ENCODE measurements at regions of chr18 and their contacts with region 1.

Region 1: DNA sequence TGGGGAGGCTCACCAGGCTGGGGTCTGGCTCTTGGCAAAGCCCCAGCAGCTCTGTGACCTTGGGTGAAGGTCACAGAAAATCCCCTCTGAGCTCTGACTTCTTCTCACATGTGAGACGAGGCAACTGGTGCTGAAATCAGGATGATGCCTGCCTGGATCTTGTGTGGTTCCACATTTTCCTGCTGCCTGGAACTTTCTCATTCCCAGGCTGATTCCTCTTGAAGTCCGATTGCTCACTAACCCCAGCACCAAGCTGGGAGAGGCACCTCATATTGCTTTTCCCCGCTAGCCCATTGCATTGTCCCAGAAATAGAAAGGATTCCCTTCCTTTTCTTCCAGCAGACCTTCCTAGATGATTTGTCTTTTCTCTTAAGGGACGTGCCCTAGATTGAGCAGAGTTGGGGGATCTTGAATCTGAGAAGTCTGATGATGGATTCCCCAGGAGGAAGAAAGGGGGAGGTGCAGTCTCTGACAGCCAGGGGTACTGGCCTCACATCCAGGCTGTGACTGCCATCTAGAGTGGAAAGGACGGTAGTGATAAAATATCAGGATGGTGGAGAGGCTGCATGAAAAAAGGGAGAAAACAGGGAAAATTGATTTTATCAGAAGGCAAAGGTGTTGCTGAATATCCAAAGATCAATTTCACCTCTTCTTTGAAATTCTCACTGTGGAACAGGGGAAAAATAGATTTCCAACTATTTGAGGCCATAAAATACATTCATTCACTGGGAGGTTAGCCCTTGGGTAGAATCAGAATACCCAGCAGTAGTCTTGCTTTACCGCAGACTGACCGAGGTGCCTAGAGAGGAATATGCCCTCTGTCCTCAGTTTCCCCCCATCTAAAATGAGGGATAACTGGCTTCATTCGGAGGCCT is 96.3 kb downstream of the FAM210A start:
- DNase-seq: peak; percentile 48
- ATAC-seq: peak; percentile 99
- H3K4me3 ChIP-seq: no peak overlapping the region
- H3K27ac ChIP-seq: no peak overlapping the region
- H3K4me1 ChIP-seq: no peaks in the 10 kb centered on the region
- H3K27me3 ChIP-seq: no peaks in the 10 kb centered on the region
- CTCF ChIP-seq: peak; percentile 73 to 86 (median 77); a peak in 5 of 6 replicates
- POLR2A ChIP-seq: no peak
- RAD21 ChIP-seq: peak; percentile 86

Region 2: GRCh38 chr18:12726774-12727550 is 903.1 kb before region 1 on chr18:
- CTCF ChIA-PET with region 1: no interaction called
- POLR2A ChIA-PET with region 1: no interaction called
- RAD21 ChIA-PET with region 1: no interaction called
- intact Hi-C with region 1: loop called (anchors 5 kb)
- DNase-seq: peak; percentile 49
- ATAC-seq: peak; percentile 63
- H3K4me3 ChIP-seq: no peak overlapping the region
- H3K27ac ChIP-seq: no peak overlapping the region
- H3K4me1 ChIP-seq: peaks cover 0 to 8% of the 10 kb centered on the region in 2 experiments; a peak in 3 of 4 replicates
- H3K27me3 ChIP-seq: no peaks in the 10 kb centered on the region
- CTCF ChIP-seq: peak; percentile 71 to 92 (median 86); a peak in 5 of 6 replicates
- POLR2A ChIP-seq: no peak
- RAD21 ChIP-seq: peak; percentile 79

Region 3: DNA sequence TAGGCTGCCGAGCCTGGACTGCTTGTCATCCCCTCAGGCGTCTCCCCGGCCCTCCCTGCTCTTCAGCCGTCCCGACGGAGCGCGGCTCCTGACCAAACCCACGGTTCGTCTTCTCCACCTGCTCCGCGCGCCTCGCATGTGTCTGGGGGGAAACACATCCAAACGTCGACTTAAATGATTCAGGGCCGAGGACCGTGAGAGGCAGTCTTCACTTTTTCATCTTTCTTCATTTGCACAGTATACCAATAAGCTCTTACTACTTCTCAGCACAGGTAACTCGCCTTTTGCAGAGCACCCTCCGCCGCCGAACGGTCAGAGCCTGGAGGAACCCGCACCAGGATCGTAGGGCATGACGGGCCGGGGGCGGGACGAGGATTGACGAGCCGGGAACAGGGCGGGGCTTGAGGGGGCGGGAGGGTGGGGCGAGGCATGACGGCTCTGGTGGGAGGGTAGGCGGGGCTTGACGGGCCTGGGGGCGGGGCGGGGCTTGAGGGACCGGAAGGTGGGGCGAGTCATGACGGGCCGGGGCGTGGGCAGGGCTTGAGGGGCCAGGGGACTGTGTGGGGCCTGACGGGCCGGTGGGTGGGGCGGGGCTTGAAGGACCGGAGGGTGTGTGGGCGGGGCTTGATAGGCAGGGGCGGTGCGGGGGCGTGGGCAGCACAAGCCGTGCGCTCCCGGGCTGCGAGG is 682.6 kb before region 1 on chr18 and contains the start of gene SEH1L:
- CTCF ChIA-PET with region 1: no interaction called
- POLR2A ChIA-PET with region 1: no interaction called
- RAD21 ChIA-PET with region 1: no interaction called
- intact Hi-C with region 1: loop called (anchors 10 kb)
- DNase-seq: peak; percentile 93
- ATAC-seq: peak; percentile 89
- H3K4me3 ChIP-seq: peak within 1 kb of the TSS; percentile 71 to 86
- H3K27ac ChIP-seq: peak within 1 kb of the TSS; percentile 92
- H3K4me1 ChIP-seq: peaks cover 11 to 23% of the 10 kb centered on the region in 2 experiments; a peak in 3 of 4 replicates
- H3K27me3 ChIP-seq: no peaks in the 10 kb centered on the region
- CTCF ChIP-seq: no peak
- POLR2A ChIP-seq: peak; percentile 78
- RAD21 ChIP-seq: no peak; the same call in 1 of the 2 replicates
- total RNA-seq, gene SEH1L: 83.7 TPM

Region 4: DNA sequence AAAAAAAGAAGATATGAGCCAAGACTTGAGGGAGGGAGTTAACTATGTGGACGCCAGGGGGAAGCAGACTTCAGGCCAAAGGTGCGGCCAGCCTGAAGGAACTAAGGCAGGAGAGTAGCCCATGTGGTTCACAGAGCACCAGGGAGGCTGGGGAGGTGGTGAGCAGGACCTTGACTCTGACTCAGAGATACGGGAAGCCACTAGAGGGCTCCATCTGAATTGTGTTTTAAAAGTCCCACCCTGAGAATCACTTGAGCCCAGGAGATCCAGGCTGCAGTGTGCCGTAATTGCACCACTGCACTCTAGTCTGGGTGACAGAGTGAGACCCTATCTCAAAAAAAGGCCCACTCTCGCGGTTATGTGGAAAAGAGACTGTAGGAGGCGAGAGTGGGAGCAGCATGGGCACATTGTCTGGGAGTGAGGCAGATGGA is 626.6 kb before region 1 on chr18:
- CTCF ChIA-PET with region 1: no interaction called
- POLR2A ChIA-PET with region 1: no interaction called
- RAD21 ChIA-PET with region 1: no interaction called
- intact Hi-C with region 1: loop called (anchors 1 kb)
- DNase-seq: peak; percentile 78
- ATAC-seq: peak; percentile 100
- H3K4me3 ChIP-seq: no peak overlapping the region
- H3K27ac ChIP-seq: no peak overlapping the region
- H3K4me1 ChIP-seq: no peaks in the 10 kb centered on the region
- H3K27me3 ChIP-seq: no peaks in the 10 kb centered on the region
- CTCF ChIP-seq: peak; percentile 41 to 63 (median 60)
- POLR2A ChIP-seq: no peak
- RAD21 ChIP-seq: peak; percentile 51

Region 5: DNA sequence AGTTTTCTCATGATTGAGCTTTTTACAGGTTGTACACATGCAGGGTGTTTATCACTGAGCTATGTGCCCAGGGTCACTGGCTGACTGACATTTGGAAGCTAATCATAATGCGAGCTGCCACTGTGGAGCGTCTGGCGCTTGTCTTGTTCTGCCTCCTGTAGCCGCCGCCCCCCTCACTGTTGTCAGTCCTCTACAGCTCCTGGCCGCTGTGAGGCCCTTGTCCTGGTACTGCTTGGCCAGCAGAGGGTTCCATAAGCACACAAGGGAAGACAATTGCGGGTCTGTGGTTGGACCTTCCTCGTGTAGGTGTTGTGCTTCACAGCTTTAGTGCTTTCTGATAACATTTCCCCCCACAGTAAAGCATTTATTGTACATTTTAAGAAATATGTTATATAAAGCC is 517.1 kb before region 1 on chr18:
- CTCF ChIA-PET with region 1: interaction called, 6 read pairs
- POLR2A ChIA-PET with region 1: no interaction called
- RAD21 ChIA-PET with region 1: no interaction called
- intact Hi-C with region 1: loop called (anchors 2 kb)
- DNase-seq: peak; percentile 2
- ATAC-seq: peak; percentile 95
- H3K4me3 ChIP-seq: no peak overlapping the region
- H3K27ac ChIP-seq: no peak overlapping the region
- H3K4me1 ChIP-seq: no peaks in the 10 kb centered on the region
- H3K27me3 ChIP-seq: no peaks in the 10 kb centered on the region
- CTCF ChIP-seq: peak in 2 of 3 experiments; percentile 35 to 36; a peak in 3 of 6 replicates
- POLR2A ChIP-seq: no peak
- RAD21 ChIP-seq: peak; percentile 18; the same call in 1 of the 2 replicates

Region 6: DNA sequence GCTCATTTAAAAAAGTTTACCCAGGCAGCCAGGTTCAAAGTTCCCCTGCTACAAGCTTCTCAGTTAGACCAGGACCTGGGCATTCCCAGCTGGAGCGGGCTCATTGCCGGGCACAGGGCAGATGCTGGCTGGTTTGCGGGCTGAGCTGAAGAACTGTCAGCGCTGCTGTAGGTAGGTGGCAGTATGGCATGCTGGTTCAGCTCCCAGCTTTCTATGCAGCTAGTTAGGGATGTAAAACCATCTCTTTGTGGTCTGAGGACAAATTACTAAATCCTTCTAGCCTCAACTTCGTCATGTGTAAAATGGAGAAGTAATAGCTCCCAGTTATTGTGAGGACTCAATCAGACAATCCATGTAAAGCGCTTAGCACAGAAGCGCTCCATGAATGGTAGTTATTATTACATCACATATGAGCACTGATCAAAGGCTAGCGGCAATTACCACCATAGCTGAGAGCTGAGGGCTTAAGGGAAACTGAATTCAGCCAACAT is 413.9 kb before region 1 on chr18:
- CTCF ChIA-PET with region 1: interaction called, 9 read pairs
- POLR2A ChIA-PET with region 1: no interaction called
- RAD21 ChIA-PET with region 1: no interaction called
- intact Hi-C with region 1: loop called (anchors 1 kb)
- DNase-seq: peak; percentile 31
- ATAC-seq: peak; percentile 81
- H3K4me3 ChIP-seq: no peak overlapping the region
- H3K27ac ChIP-seq: no peak overlapping the region
- H3K4me1 ChIP-seq: peaks cover 4 to 5% of the 10 kb centered on the region in 2 experiments; a peak in 2 of 4 replicates
- H3K27me3 ChIP-seq: peaks cover 19% of the 10 kb centered on the region
- CTCF ChIP-seq: peak; percentile 45 to 72 (median 64); a peak in 5 of 6 replicates
- POLR2A ChIP-seq: no peak
- RAD21 ChIP-seq: peak; percentile 74

Region 7: DNA sequence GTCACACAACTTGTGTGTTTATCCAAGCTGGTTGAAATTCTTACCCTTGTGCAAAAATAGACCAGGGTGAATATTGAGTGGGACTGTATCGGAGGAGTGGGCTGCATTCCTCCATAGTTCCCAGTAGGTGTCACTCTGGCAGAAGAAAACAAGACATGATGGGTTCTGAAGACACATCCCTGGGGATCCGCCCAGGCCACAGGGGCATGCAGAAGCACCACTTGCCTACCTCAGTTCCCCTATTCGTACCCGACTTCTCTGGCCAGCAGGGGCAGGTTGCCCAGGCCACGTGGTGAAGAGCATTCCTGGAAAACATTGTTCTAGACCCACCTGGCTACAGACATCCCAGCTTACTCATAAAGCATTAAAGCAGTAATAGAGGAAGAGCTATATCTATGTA is 72.0 kb before region 1 on chr18:
- CTCF ChIA-PET with region 1: no interaction called
- POLR2A ChIA-PET with region 1: no interaction called
- RAD21 ChIA-PET with region 1: no interaction called
- intact Hi-C with region 1: loop called (anchors 1 kb)
- DNase-seq: peak; percentile 31
- ATAC-seq: peak; percentile 99
- H3K4me3 ChIP-seq: no peak overlapping the region
- H3K27ac ChIP-seq: no peak overlapping the region
- H3K4me1 ChIP-seq: no peaks in the 10 kb centered on the region
- H3K27me3 ChIP-seq: peaks cover 15% of the 10 kb centered on the region
- CTCF ChIP-seq: peak; percentile 52 to 74 (median 70); a peak in 5 of 6 replicates
- POLR2A ChIP-seq: no peak
- RAD21 ChIP-seq: peak; percentile 68